ENCODE measurements at regions of chr10 and their contacts with region 1.

Region 1: GRCh38 chr10:86399879-86400704 is 33.5 kb upstream of the GRID1 start:
- DNase-seq: peak; percentile 94
- ATAC-seq: peak; percentile 96
- H3K4me3 ChIP-seq: peak overlapping the region; percentile 71 to 88 (median 80)
- H3K27ac ChIP-seq: peak overlapping the region; percentile 74
- H3K4me1 ChIP-seq: peaks cover 28% of the 10 kb centered on the region
- H3K27me3 ChIP-seq: 0 out of 5 replicates have a peak, but pooled peaks cover 0 to 4% of the 10 kb centered on the region in 2 experiments
- CTCF ChIP-seq: peak; percentile 99
- EP300 ChIP-seq: no peak
- POLR2A ChIP-seq: peak; percentile 56 to 61
- RAD21 ChIP-seq: peak; percentile 100

Region 2: GRCh38 chr10:85446827-85447226 is 953.3 kb before region 1 on chr10:
- CTCF ChIA-PET with region 1: no interaction called
- POLR2A ChIA-PET with region 1: no interaction called
- in situ Hi-C with region 1: no loop called
- intact Hi-C with region 1: no loop called
- DNase-seq: no peak
- ATAC-seq: no peak
- H3K4me3 ChIP-seq: no peak overlapping the region
- H3K27ac ChIP-seq: no peak overlapping the region
- H3K4me1 ChIP-seq: no peaks in the 10 kb centered on the region
- H3K27me3 ChIP-seq: no peaks in the 10 kb centered on the region
- CTCF ChIP-seq: no peak
- EP300 ChIP-seq: no peak
- POLR2A ChIP-seq: no peak
- RAD21 ChIP-seq: no peak

Region 3: DNA sequence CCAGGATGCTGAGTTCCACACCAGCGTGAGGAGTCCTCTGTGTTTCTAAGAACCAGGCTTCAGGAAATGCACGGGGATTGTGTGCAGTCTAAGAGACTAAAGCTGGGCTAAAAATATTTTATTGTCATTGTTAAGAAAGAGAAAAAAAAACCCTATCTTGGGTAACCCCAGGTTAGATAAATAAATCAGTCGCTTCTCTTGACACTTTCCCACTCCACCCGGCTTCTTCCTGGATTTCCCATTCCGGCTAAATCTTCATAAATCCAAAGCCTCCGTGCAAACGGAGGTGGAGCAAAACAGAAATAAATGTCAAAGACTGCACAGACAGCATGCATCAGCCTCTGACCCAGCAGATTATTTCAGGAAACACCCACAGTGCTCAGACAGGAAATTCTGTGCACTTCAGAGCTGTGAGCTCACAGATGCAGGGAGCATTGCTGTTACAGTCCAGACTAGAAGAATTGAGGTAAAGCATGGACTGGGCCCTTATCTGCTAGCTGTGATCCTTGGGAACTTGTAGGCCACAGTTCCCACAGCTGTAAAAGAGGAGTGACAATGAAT is 11.3 kb after region 1 on chr10:
- CTCF ChIA-PET with region 1: no interaction called
- POLR2A ChIA-PET with region 1: interaction called, 38 read pairs
- in situ Hi-C with region 1: no loop called
- intact Hi-C with region 1: loop called (anchors 1 kb)
- DNase-seq: peak; percentile 58
- ATAC-seq: peak; percentile 82
- H3K4me3 ChIP-seq: peak overlapping the region in 1 of 3 experiments; percentile 15; a peak in 1 of 6 replicates
- H3K27ac ChIP-seq: peak overlapping the region; percentile 64
- H3K4me1 ChIP-seq: peaks cover 37% of the 10 kb centered on the region
- H3K27me3 ChIP-seq: no peaks in the 10 kb centered on the region
- CTCF ChIP-seq: no peak
- EP300 ChIP-seq: peak in 1 of 2 experiments; percentile 25; a peak in 1 of 4 replicates
- POLR2A ChIP-seq: no peak
- RAD21 ChIP-seq: no peak

Region 4: GRCh38 chr10:86439544-86439943 is 39.5 kb after region 1 on chr10:
- CTCF ChIA-PET with region 1: no interaction called
- POLR2A ChIA-PET with region 1: interaction called, 79 read pairs
- in situ Hi-C with region 1: loop called (anchors 5 kb)
- intact Hi-C with region 1: loop called (anchors 1 kb)
- DNase-seq: peak; percentile 66
- ATAC-seq: no peak
- H3K4me3 ChIP-seq: no peak overlapping the region
- H3K27ac ChIP-seq: peak overlapping the region; percentile 87
- H3K4me1 ChIP-seq: peaks cover 99% of the 10 kb centered on the region
- H3K27me3 ChIP-seq: no peaks in the 10 kb centered on the region
- CTCF ChIP-seq: no peak
- EP300 ChIP-seq: peak in 1 of 2 experiments; percentile 47; a peak in 1 of 4 replicates
- POLR2A ChIP-seq: no peak
- RAD21 ChIP-seq: no peak

Region 5: DNA sequence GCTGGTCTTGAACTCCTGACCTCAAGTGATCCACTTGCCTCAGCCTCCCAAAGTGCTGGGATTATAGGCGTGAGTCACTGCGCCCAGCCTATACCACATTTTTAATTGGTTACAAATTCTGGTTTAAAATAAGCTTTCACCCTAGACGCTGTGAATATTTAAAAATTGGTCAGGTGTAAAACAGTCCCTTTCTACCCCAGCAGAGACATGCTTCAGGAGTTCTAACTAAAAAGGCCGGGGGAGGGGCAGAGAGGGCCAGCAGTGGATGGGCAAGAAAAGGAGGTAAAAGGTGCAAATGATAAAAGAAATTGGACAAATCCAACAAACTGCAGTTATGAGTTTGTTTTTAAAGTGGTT is 51.5 kb after region 1 on chr10:
- CTCF ChIA-PET with region 1: no interaction called
- POLR2A ChIA-PET with region 1: no interaction called
- in situ Hi-C with region 1: no loop called
- intact Hi-C with region 1: loop called (anchors 2 kb)
- DNase-seq: no peak
- ATAC-seq: no peak
- H3K4me3 ChIP-seq: no peak overlapping the region
- H3K27ac ChIP-seq: no peak overlapping the region
- H3K4me1 ChIP-seq: peaks cover 30% of the 10 kb centered on the region
- H3K27me3 ChIP-seq: no peaks in the 10 kb centered on the region
- CTCF ChIP-seq: no peak
- EP300 ChIP-seq: no peak
- POLR2A ChIP-seq: no peak
- RAD21 ChIP-seq: no peak

Region 6: GRCh38 chr10:86521678-86522509 is 121.8 kb after region 1 on chr10 and contains the start of gene WAPL:
- CTCF ChIA-PET with region 1: no interaction called
- POLR2A ChIA-PET with region 1: interaction called, 20 read pairs
- in situ Hi-C with region 1: no loop called
- intact Hi-C with region 1: loop called (anchors 1 kb)
- DNase-seq: peak; percentile 87
- ATAC-seq: peak; percentile 94
- H3K4me3 ChIP-seq: peak within 1 kb of the TSS; percentile 73 to 99 (median 79)
- H3K27ac ChIP-seq: peak within 1 kb of the TSS; percentile 87
- H3K4me1 ChIP-seq: peaks cover 58% of the 10 kb centered on the region
- H3K27me3 ChIP-seq: no peaks in the 10 kb centered on the region; a peak in 1 of 5 replicates
- CTCF ChIP-seq: peak; percentile 28; the same call in 1 of the 2 replicates
- EP300 ChIP-seq: no peak
- POLR2A ChIP-seq: peak; percentile 60 to 77; a peak in 3 of 4 replicates
- RAD21 ChIP-seq: peak; percentile 44
- total RNA-seq, gene WAPL: 43.5 and 64.9 TPM in 2 replicates

Region 7: GRCh38 chr10:86535057-86535882 is 135.2 kb after region 1 on chr10:
- CTCF ChIA-PET with region 1: no interaction called
- POLR2A ChIA-PET with region 1: interaction called, 17 read pairs
- in situ Hi-C with region 1: no loop called
- intact Hi-C with region 1: no loop called
- DNase-seq: peak; percentile 38
- ATAC-seq: peak; percentile 95
- H3K4me3 ChIP-seq: peak overlapping the region; percentile 74 to 81 (median 79)
- H3K27ac ChIP-seq: no peak overlapping the region
- H3K4me1 ChIP-seq: peaks cover 24% of the 10 kb centered on the region
- H3K27me3 ChIP-seq: peaks cover 0 to 1% of the 10 kb centered on the region in 2 experiments; a peak in 1 of 5 replicates
- CTCF ChIP-seq: no peak
- EP300 ChIP-seq: no peak; a peak in 1 of 4 replicates
- POLR2A ChIP-seq: peak in 1 of 2 experiments; percentile 58; a peak in 2 of 4 replicates
- RAD21 ChIP-seq: no peak

Region 8: GRCh38 chr10:86585037-86585725 is 185.1 kb after region 1 on chr10:
- CTCF ChIA-PET with region 1: interaction called, 43 read pairs
- POLR2A ChIA-PET with region 1: interaction called, 8 read pairs
- in situ Hi-C with region 1: loop called (anchors 5 kb)
- intact Hi-C with region 1: loop called (anchors 1 kb)
- DNase-seq: peak; percentile 57
- ATAC-seq: peak; percentile 95
- H3K4me3 ChIP-seq: peak overlapping the region in 1 of 3 experiments; percentile 48; a peak in 2 of 6 replicates
- H3K27ac ChIP-seq: no peak overlapping the region
- H3K4me1 ChIP-seq: peaks cover 20% of the 10 kb centered on the region; the same call in 1 of the 2 replicates
- H3K27me3 ChIP-seq: peaks cover 0 to 7% of the 10 kb centered on the region in 2 experiments; a peak in 2 of 5 replicates
- CTCF ChIP-seq: peak; percentile 97
- EP300 ChIP-seq: no peak
- POLR2A ChIP-seq: no peak
- RAD21 ChIP-seq: peak; percentile 94